Activated B cell treated with CpG ODN at 0.5 μM for 24 hours (primary cell): ENCODE measurements at regions of chr9 and their contacts with region 1.

Region 1: GRCh38 chr9:112717661-112718341 is at the start of gene INIP:
- DNase-seq: peak; percentile 95
- ATAC-seq: peak; percentile 93
- H3K4me3 Mint-ChIP-seq: peak within 1 kb of the TSS; percentile 100
- H3K27ac Mint-ChIP-seq: peak within 1 kb of the TSS; percentile 98
- H3K4me1 Mint-ChIP-seq: peaks cover 19% of the 10 kb centered on the region
- H3K27me3 Mint-ChIP-seq: no peaks in the 10 kb centered on the region
- CTCF ChIP-seq: no peak
- total RNA-seq, gene INIP: 31.1 and 32.1 TPM in 2 replicates

Region 2: DNA sequence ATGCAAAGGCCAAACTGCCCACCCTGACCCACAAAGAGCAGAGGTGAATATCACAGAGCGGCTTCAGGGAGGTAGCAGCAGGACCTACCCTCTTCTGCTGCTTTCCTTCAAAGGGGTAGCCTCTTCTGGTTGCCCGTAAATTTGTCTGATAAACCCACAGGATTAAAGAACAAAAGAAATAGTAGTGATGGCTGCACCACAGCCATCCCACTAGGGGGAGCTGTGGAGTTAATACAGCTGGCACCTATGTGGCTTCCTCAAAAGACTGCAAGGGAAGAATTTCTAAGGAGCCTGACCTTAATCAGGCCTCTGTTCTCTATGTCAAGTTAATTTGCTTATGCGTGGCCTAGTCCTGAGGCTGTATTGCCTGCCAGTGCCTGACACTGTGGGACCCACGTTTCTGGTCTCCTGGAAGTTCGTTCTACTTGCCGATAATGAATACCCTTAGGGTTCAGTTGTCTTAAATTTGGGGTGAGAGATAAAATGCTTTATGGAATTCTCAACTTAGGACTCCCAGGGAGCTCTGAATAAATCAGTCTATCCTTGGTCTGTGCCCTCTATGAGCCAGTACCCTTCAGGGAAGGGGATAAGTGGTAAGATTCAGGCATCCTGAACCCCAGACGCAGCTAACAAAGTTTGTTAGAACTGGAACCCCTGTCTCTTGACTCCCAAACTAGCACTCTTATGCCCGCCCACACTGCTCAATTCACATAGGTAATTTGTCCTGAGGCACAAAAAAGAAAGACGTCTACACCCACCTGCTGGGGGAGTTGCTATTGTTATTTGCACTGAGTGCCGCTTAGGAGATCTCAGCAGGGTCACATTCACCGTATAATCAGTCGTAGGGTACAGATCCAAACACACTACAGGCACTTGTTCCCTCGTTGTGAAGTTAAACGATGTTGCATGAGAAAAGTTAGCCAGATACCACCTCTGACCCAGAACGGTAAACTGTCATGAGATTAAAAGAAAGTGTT is 619.8 kb before region 1 on chr9:
- CTCF ChIA-PET with region 1: no interaction called
- POLR2A ChIA-PET with region 1: no interaction called
- intact Hi-C with region 1: loop called (anchors 10 kb)
- DNase-seq: no peak
- ATAC-seq: peak; percentile 95
- H3K4me3 Mint-ChIP-seq: no peak overlapping the region
- H3K27ac Mint-ChIP-seq: no peak overlapping the region
- H3K4me1 Mint-ChIP-seq: peaks cover 38% of the 10 kb centered on the region
- H3K27me3 Mint-ChIP-seq: no peaks in the 10 kb centered on the region
- CTCF ChIP-seq: peak; percentile 34

Region 3: DNA sequence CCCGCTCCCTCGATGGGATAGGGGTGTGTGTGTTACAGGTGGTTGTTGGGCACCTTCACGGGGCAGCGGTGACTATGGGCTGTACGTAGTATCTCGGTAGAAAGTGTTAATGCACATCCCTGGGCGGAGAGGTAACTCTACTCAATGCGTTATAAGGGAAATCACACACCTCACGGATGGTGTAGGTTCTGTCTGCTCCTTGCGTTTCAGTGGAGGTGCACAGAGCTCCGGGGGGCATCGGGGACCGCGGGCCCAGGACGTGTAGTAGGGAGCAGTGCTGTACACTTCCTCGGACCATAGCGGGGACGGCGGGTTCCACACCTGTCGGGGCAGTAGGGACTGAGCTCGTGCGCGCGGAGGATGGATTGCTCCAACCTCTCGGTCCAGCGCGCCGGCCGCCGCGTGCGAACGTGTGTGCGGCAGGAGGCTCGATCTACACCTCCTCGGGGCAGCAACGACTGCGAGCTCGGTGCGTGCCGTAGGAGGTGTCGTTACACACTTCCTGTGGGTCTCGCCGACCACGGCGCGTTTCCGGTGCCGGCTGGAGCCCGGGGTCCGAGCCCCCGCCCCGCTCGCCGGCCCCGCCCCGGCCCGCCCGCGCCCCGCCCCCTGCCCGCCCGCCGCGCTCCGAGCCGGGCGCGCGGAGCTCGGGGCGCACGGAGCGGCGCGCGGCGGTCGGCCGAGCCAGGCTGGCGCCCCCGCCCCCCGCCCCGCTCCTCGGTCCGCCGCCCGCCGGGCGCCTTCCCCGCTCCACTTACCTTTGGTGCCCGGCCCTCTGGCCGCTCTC is 231.4 kb before region 1 on chr9 and contains the start of gene KIAA1958:
- CTCF ChIA-PET with region 1: no interaction called
- POLR2A ChIA-PET with region 1: interaction called, 6 read pairs
- intact Hi-C with region 1: loop called (anchors 1 kb)
- DNase-seq: peak; percentile 75
- ATAC-seq: peak; percentile 89
- H3K4me3 Mint-ChIP-seq: peak within 1 kb of the TSS; percentile 97
- H3K27ac Mint-ChIP-seq: peak within 1 kb of the TSS; percentile 89
- H3K4me1 Mint-ChIP-seq: peaks cover 19% of the 10 kb centered on the region
- H3K27me3 Mint-ChIP-seq: no peaks in the 10 kb centered on the region
- CTCF ChIP-seq: no peak
- total RNA-seq, gene KIAA1958: 5.8 and 7.4 TPM in 2 replicates

Region 4: GRCh38 chr9:112532427-112532826 is 185.4 kb before region 1 on chr9:
- CTCF ChIA-PET with region 1: no interaction called
- POLR2A ChIA-PET with region 1: no interaction called
- intact Hi-C with region 1: no loop called
- DNase-seq: no peak
- ATAC-seq: no peak
- H3K4me3 Mint-ChIP-seq: no peak overlapping the region
- H3K27ac Mint-ChIP-seq: no peak overlapping the region
- H3K4me1 Mint-ChIP-seq: peaks cover 4% of the 10 kb centered on the region
- H3K27me3 Mint-ChIP-seq: no peaks in the 10 kb centered on the region
- CTCF ChIP-seq: no peak

Region 5: DNA sequence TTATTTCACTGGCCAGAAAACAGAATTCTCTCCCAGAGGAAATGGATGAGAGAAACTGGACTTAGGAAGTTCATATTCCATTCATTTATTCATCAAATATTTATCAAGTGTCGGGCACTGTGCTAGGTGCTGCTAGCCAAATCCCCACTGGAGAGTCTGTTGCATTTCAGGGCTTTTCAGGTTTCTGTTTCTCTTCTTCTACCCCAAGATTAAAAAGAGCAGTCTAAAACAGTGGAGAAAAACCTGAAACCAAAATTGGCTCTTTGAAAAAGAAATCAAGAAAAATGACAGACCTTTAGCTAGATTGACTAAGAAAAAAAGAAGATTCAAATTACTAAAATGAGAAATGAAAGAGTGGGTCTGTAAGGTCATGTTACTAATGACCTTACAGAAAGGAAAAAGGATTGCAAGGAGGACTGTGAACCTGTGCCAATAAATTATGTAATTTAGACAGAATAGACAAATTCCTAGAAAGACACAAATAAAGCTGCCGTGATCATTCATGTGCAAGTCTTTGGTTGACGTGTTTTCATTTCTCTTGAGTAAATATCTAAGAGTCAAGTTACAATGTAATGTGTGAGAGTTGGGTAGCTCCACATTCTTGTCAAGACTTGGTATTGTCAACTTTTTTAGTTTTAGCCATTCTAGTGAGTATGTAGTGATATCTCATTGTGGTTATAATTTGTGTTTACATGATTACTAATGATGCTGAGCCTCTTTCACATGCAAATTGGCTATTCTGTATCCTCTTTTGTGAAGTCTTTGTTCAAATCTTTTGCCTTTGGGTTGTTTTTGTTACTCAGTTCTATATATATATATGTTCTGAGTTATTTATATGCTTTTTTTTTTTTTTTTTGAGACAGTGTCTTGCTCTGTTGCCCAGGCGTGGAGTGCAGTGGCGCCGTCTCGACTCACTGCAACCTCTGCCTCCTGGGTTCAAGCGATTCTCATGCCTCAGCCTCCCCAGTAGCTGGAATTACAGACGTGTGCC is 56.5 kb after region 1 on chr9:
- CTCF ChIA-PET with region 1: no interaction called
- POLR2A ChIA-PET with region 1: no interaction called
- intact Hi-C with region 1: no loop called
- DNase-seq: no peak
- ATAC-seq: peak; percentile 11
- H3K4me3 Mint-ChIP-seq: peak overlapping the region; percentile 13
- H3K27ac Mint-ChIP-seq: peak overlapping the region; percentile 59
- H3K4me1 Mint-ChIP-seq: peaks cover 57% of the 10 kb centered on the region
- H3K27me3 Mint-ChIP-seq: no peaks in the 10 kb centered on the region
- CTCF ChIP-seq: no peak

Region 6: GRCh38 chr9:112786834-112787492 is 69.2 kb after region 1 on chr9:
- CTCF ChIA-PET with region 1: interaction called, 9 read pairs
- POLR2A ChIA-PET with region 1: interaction called, 5 read pairs
- intact Hi-C with region 1: loop called (anchors 1 kb)
- DNase-seq: no peak
- ATAC-seq: peak; percentile 82
- H3K4me3 Mint-ChIP-seq: peak overlapping the region; percentile 66
- H3K27ac Mint-ChIP-seq: peak overlapping the region; percentile 77
- H3K4me1 Mint-ChIP-seq: peaks cover 35% of the 10 kb centered on the region
- H3K27me3 Mint-ChIP-seq: no peaks in the 10 kb centered on the region
- CTCF ChIP-seq: no peak